ENCODE measurements at regions of chr9 and their contacts with region 1.

Region 1: DNA sequence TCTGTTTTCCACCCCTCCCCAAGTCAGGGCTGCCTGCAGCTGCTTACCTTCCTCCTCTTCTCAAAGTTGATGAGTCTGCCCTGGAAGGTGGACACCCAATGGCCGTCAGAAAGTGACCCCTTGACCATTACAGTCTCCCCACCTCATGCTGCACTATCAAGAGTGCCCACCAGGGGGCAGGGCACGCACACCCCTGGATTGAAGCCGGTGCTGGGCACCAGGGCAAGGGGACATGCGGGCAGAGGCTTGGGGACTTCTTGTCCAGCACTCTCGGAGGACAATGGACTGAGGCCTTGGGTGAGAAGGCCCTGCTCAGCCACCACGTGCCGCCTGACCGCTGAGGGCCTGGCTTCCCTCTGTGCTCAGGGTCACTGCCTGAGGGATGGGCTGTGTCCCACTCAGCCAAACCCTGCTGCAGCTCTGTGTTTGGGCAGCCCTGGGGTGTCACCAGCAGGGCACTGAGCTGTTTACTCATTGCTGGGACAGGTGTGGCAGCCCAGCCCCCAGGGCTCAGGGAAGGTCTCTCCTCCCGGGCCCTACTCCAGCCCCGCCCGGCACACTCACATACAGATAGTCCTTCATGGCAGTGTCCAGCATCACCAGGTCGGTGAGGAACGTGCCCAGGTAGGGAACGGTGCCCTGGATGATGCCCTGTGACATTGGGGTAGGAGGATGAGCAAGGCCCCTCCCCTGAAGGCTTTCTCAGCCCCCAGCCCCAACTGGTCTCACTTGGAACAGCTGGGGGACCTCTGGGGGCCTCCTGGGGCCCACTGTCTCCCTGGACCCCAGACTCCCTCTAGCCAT is 17.7 kb downstream of the RALGDS start:
- DNase-seq: no peak
- H3K4me3 ChIP-seq: no peak overlapping the region
- H3K27ac ChIP-seq: no peak overlapping the region
- H3K27me3 ChIP-seq: no peaks in the 10 kb centered on the region
- CTCF ChIP-seq: peak; percentile 97

Region 2: GRCh38 chr9:133115448-133116345 is 12.3 kb after region 1 on chr9:
- CTCF ChIA-PET with region 1: interaction called, 14 read pairs
- POLR2A ChIA-PET with region 1: interaction called, 3 read pairs
- DNase-seq: no peak
- H3K4me3 ChIP-seq: no peak overlapping the region
- H3K27ac ChIP-seq: no peak overlapping the region
- H3K27me3 ChIP-seq: no peaks in the 10 kb centered on the region
- CTCF ChIP-seq: no peak